Aorta (tissue), 5 donors: ENCODE measurements at regions of chrX and their contacts with region 1.

Region 1: DNA sequence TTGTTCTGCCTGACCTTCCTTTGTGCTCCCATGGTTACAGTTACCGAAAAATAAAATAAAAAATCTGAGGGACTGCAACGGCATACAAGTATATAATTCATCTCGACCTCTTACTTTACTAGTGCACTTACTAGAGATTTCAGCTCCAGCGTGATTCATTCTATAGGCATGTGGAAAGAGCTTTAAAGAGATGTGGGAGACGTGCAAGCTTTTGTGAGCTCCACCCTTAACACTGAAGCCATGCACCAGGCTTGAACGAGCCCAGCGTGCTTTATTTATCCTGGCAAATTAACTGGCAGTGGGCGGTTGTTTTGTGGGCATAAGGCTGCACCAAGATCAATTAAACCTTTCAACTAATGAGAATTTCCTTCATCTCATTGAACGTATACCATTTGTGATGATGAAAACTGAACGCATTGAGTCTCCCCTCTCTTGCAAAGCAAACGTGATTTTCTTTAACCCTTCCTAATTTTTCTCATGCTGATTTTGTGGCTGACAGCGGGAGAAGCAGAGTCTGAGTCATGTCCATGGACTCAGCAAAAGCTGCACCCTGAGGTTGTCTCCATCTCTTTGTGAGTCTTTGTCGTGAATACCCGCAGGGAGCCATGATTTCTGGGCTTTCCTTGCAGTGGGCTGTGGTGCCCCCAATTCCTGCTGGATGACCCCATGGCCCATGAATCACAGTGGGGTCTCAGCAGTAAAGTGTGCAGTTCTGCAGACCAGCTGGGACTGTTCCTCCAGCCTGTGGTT is 60.1 kb downstream of the MXRA5 start:
- DNase-seq: peak in 1 of 2 donors; percentile 44
- ATAC-seq: no peak
- H3K4me3 ChIP-seq: no peak overlapping the region
- H3K27ac ChIP-seq: no peak overlapping the region
- H3K4me1 ChIP-seq: no peaks in the 10 kb centered on the region
- H3K27me3 ChIP-seq: no peaks in the 10 kb centered on the region

Region 2: DNA sequence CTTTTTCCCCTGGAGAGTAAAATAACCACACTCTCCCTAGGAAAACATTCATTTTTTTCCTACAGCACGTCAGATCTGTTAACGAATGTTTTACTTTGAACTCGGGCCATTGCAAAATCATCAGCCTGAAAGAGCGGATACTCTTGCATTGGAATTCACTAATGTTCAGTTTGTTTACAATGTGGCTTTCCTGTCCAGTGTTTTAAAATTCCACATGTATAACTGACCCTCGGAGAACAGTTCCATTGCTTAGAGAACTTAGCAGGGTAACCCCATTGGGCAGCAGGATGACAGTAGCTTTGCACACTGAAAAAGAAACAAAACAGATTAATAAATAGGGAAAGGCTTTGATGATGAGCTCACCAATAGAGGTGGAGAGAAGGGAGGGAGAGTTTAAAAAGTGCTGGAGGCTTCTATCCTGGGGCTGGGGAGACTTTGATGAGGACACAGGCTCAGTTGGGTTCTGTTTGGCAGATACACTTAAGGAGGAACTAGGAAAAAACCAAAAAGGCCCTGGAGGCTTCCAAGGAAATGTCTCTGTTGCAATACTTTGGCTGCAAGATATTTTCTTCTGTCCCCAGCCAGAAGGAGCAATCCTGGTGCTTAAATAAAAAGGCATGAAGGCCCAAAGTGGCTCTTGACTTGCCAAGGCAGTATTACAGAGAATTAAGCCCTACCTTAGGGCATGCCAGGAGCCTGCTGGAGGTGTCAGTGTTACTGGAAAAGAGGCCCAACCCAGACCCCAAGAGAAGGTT is 102.0 kb before region 1 on chrX:
- intact Hi-C with region 1: loop called in 1 of 2 experiments (anchors 10 kb)
- DNase-seq: no peak
- ATAC-seq: peak; percentile 65
- H3K4me3 ChIP-seq: no peak overlapping the region
- H3K27ac ChIP-seq: no peak overlapping the region
- H3K4me1 ChIP-seq: no peaks in the 10 kb centered on the region
- H3K27me3 ChIP-seq: no peaks in the 10 kb centered on the region